ENCODE measurements at regions of chr13 and their contacts with region 1.

Region 1: DNA sequence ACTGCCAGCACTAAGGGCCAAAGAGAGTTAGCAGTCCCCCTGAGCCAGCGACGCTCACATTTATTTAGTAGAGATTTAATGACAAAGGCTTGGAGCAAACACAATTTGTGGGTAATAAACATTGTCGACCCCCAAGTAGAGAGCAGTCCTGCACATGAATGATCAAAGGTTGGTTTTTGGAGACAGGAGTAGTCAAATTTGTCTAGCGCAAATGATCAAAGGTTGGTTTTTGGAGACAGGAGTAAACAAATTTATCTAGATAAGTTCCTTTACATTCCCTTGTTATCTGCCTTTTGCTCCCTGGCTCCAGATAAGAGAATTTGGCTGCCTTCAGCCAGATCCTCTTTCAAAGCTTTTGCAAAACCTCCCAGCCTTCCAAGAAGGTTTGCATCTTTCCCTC is 26.9 kb downstream of the METTL21C start:
- DNase-seq: no peak
- H3K4me3 ChIP-seq: no peak overlapping the region
- H3K27ac ChIP-seq: no peak overlapping the region
- H3K4me1 ChIP-seq: no peaks in the 10 kb centered on the region
- H3K27me3 ChIP-seq: no peaks in the 10 kb centered on the region
- CTCF ChIP-seq: no peak

Region 2: DNA sequence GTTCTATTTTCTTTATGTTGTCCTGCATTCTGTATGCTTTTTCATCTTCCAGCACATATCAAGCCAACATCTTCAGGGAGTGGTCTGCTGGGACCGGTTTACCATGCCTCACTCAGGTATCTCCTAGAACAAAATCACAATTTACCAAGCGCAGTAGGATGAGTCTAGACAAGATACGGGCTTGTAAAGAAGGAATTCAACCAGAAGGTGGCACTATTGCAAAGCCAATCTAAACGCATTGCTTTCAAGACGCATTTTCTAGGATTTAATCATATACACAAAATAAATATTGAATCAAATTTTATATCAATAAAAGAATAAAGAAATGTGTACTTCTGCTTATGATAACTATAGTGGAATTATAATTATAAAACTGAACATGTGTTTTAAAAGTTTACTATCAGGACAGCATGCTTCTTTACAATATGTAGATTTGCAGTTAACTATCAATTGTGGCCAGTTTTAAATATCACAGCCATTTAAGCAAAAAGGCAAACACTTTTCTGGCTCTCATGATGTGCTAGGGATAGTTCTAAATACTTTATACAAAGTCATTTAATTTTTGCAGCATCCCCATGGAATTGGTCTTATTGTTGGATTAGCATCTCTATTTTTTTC is 87.2 kb before region 1 on chr13:
- CTCF ChIA-PET with region 1: no interaction called
- POLR2A ChIA-PET with region 1: no interaction called
- intact Hi-C with region 1: no loop called
- DNase-seq: peak; percentile 23 to 65
- H3K4me3 ChIP-seq: no peak overlapping the region
- H3K27ac ChIP-seq: no peak overlapping the region
- H3K4me1 ChIP-seq: no peaks in the 10 kb centered on the region
- H3K27me3 ChIP-seq: peaks cover 10% of the 10 kb centered on the region; the same call in 1 of the 2 replicates
- CTCF ChIP-seq: peak; percentile 92

Region 3: GRCh38 chr13:102609696-102610095 is 58.2 kb before region 1 on chr13:
- CTCF ChIA-PET with region 1: no interaction called
- POLR2A ChIA-PET with region 1: no interaction called
- intact Hi-C with region 1: loop called (anchors 10 kb)
- DNase-seq: no peak
- H3K4me3 ChIP-seq: no peak overlapping the region
- H3K27ac ChIP-seq: no peak overlapping the region
- H3K4me1 ChIP-seq: 0 out of 2 replicates have a peak, but pooled peaks cover 1% of the 10 kb centered on the region
- H3K27me3 ChIP-seq: no peaks in the 10 kb centered on the region
- CTCF ChIP-seq: no peak